ENCODE measurements at regions of chr18 and their contacts with region 1.

Region 1: DNA sequence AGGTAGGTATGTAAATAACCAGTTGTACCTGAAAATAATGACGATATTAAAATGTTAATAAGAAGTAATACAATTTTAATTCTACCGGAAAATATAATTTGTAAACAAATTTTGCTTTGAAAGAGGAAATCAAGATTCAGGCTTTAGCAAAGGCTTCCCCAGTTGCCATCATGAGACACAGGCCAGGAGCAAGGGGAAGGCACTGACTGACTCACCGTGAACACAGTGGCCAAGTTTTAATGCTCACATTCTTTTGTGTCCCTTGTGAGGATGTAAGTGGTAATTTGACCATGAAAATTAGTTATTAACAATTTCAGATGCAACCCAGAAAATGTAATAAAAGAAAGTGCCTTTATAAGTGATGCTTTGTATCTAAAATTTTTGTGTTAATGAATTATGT is 164.1 kb downstream of the GREB1L start:
- DNase-seq: no peak
- H3K4me3 ChIP-seq: no peak overlapping the region
- H3K27ac ChIP-seq: no peak overlapping the region
- H3K4me1 ChIP-seq: no peaks in the 10 kb centered on the region
- CTCF ChIP-seq: no peak

Region 2: DNA sequence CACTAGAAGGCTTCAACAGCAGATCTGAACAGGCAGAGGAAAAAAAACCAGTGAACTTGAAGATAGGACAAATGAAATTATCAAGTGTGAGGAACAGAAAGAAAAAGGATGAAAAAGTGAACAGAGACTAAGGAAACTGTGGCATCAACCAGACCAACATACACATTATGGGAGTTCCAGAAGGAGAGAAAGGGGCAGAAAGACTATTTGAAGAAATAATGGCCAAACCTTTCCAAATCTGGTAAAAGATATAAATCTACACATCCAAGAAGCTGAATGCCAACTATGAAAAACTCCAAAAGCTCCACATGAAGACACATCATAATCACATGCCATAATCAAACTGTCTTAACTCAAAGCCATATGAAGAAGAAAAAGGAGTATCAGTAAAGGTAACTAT is 374.3 kb before region 1 on chr18:
- CTCF ChIA-PET with region 1: no interaction called
- POLR2A ChIA-PET with region 1: no interaction called
- intact Hi-C with region 1: loop called (anchors 10 kb)
- DNase-seq: no peak
- H3K4me3 ChIP-seq: no peak overlapping the region
- H3K27ac ChIP-seq: no peak overlapping the region
- H3K4me1 ChIP-seq: no peaks in the 10 kb centered on the region
- CTCF ChIP-seq: no peak

Region 3: GRCh38 chr18:21123290-21123926 is 282.7 kb before region 1 on chr18:
- CTCF ChIA-PET with region 1: no interaction called
- POLR2A ChIA-PET with region 1: no interaction called
- intact Hi-C with region 1: no loop called
- DNase-seq: no peak
- H3K4me3 ChIP-seq: no peak overlapping the region
- H3K27ac ChIP-seq: no peak overlapping the region
- H3K4me1 ChIP-seq: no peaks in the 10 kb centered on the region
- CTCF ChIP-seq: no peak

Region 4: DNA sequence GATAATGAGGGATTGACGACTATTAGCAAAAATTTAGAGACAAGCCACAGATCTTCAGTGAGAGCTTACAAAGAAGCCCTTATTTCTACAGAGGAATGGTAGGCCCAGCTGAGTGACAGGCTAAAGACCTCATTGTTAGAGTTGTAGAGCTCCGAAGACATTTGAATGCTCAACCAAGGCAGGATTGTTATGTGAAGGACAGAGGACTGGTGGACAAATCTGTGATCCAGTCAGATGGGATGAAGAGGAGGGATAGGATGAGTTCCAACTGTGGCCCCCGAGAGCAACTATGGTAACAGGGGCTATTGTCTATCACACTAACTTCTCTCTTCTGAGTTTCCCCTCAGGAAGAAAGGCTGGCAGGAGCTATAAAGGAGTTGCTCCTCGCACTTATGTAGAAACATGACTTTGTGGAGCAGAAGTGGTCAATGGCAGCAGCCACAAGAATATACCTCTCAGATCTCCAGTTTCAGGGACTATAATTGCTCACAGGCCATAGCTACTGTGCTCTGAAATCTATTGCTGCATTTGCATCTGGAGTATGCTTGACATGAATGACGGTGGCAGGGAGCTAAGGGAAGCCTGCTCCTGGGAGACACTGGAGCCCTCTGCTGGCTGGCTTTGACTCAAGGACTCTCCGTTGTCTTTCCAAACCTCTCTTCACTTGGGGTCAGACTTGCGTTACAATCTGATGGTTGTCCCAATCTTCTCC is 214.4 kb before region 1 on chr18:
- CTCF ChIA-PET with region 1: no interaction called
- POLR2A ChIA-PET with region 1: no interaction called
- intact Hi-C with region 1: loop called (anchors 10 kb)
- DNase-seq: peak; percentile 30
- H3K4me3 ChIP-seq: no peak overlapping the region
- H3K27ac ChIP-seq: no peak overlapping the region
- H3K4me1 ChIP-seq: no peaks in the 10 kb centered on the region
- CTCF ChIP-seq: peak; percentile 77

Region 5: GRCh38 chr18:21298351-21298750 is 107.8 kb before region 1 on chr18:
- CTCF ChIA-PET with region 1: no interaction called
- POLR2A ChIA-PET with region 1: no interaction called
- intact Hi-C with region 1: loop called (anchors 10 kb)
- DNase-seq: no peak
- H3K4me3 ChIP-seq: no peak overlapping the region
- H3K27ac ChIP-seq: no peak overlapping the region
- H3K4me1 ChIP-seq: no peaks in the 10 kb centered on the region
- CTCF ChIP-seq: no peak

Measured in OCI-LY7 (cell line).